CD8-positive, alpha-beta T cell (primary cell): ENCODE measurements at regions of chr10 and their contacts with region 1.

Region 1: GRCh38 chr10:101467286-101467770 is 113.4 kb downstream of the BTRC start:
- DNase-seq: peak in 5 of 9 experiments; percentile 7 to 73 (median 23)
- ATAC-seq: peak; percentile 75
- H3K4me3 ChIP-seq: no peak overlapping the region
- H3K4me3 Mint-ChIP-seq: no peak overlapping the region
- H3K27ac ChIP-seq: no peak overlapping the region
- H3K27ac Mint-ChIP-seq: no peak overlapping the region
- H3K4me1 ChIP-seq: peaks cover 4% of the 10 kb centered on the region
- H3K4me1 Mint-ChIP-seq: peaks cover 8% of the 10 kb centered on the region
- H3K27me3 ChIP-seq: no peaks in the 10 kb centered on the region
- H3K27me3 Mint-ChIP-seq: no peaks in the 10 kb centered on the region
- CTCF ChIP-seq: peak; percentile 86

Region 2: DNA sequence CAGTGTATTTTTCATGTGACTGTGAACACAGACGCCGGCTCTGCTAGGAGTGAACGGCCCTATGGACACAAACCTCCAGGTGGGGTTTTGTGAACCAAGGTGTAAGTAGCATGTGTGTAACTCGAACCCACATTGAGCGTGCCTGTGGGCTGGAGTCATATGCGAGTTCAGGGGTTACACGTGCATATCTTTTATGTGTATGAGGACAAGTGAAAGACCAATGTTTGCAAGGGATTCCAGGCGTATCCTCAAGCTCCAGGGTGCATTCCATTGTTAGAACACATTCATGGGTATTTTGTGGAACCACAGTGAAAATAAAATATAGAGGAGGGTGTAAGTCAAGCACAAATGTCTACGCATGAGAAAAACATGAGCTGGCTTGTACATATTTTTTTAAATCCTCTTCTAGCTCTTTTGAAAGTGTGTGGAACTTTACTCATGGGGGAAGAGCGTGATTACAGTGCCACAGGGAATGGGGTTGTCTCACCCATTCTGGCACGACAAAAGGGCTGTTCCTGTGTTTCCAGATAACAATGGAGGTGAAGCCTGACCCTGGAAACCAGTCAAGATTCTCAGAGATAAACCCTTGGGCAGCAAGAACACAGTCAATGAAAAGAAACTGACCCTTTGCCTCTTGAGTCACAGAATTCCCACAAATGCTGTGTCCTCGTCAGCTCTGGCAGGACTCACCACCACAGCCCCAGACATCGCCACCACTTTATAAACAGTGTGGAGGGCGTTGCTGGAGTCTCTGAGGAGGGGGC is 1999.9 kb before region 1 on chr10:
- CTCF ChIA-PET with region 1: no interaction called
- POLR2A ChIA-PET with region 1: no interaction called
- intact Hi-C with region 1: no loop called
- DNase-seq: no peak
- ATAC-seq: no peak
- H3K4me3 ChIP-seq: no peak overlapping the region
- H3K4me3 Mint-ChIP-seq: no peak overlapping the region
- H3K27ac ChIP-seq: no peak overlapping the region
- H3K27ac Mint-ChIP-seq: no peak overlapping the region
- H3K4me1 ChIP-seq: no peaks in the 10 kb centered on the region
- H3K4me1 Mint-ChIP-seq: no peaks in the 10 kb centered on the region
- H3K27me3 ChIP-seq: peaks cover 0 to 5% of the 10 kb centered on the region in 2 experiments
- H3K27me3 Mint-ChIP-seq: peaks cover 25% of the 10 kb centered on the region
- CTCF ChIP-seq: no peak

Region 3: GRCh38 chr10:101297901-101298486 is 169.3 kb before region 1 on chr10:
- CTCF ChIA-PET with region 1: interaction called, 9 read pairs
- POLR2A ChIA-PET with region 1: no interaction called
- intact Hi-C with region 1: loop called (anchors 2 to 5 kb)
- DNase-seq: peak; percentile 51 to 82 (median 74)
- ATAC-seq: peak; percentile 89
- H3K4me3 ChIP-seq: no peak overlapping the region
- H3K4me3 Mint-ChIP-seq: no peak overlapping the region
- H3K27ac ChIP-seq: no peak overlapping the region
- H3K27ac Mint-ChIP-seq: no peak overlapping the region
- H3K4me1 ChIP-seq: peaks cover under 1% of the 10 kb centered on the region
- H3K4me1 Mint-ChIP-seq: peaks cover 2% of the 10 kb centered on the region
- H3K27me3 ChIP-seq: peaks cover 3 to 4% of the 10 kb centered on the region in 2 experiments
- H3K27me3 Mint-ChIP-seq: peaks cover 50% of the 10 kb centered on the region
- CTCF ChIP-seq: peak; percentile 89

Region 4: DNA sequence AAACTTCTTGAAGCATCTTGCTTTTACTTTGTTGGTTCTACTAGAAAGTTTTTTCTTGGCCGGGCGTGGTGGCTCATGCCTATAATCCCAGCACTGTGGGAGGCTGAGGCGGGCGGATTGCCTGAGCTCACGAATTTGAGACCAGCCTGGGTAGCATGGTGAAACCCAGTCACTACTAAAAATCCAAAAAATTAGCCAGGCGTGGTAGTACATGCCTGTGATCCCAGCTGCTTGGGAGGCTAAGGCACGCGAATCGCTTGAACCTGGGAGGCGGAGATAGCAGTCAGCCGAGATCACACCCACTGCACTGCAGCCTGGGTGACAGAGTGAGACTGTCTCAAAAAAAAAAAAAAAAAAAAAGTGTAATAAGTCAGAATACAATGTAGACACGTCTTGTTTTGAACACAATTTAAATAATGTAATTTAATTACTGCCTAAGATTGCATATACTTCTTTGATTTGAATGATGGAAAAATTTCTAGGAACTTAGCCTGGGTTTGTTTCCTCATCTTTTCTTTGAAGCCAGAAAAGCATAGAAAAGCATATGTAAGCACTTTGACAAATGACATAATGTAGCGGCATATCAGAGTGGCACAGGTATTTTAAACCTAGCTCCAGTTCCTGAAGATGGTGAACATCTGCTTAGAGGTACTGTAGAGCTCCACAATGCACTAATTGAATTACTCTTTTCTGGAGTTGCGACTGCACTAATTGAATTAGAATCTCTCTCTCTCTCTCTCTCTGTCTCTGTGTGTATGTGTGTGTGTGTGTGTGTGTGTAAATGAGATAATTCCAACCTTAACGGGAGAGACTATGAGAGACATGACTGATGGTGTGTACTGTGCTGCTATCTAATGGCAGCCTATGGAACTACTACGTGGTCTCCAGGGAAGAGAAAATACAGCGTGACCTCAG is 25.5 kb before region 1 on chr10:
- CTCF ChIA-PET with region 1: interaction called, 14 read pairs
- POLR2A ChIA-PET with region 1: no interaction called
- intact Hi-C with region 1: no loop called
- DNase-seq: peak in 2 of 9 experiments; percentile 43 to 61
- ATAC-seq: peak; percentile 89
- H3K4me3 ChIP-seq: no peak overlapping the region
- H3K4me3 Mint-ChIP-seq: no peak overlapping the region
- H3K27ac ChIP-seq: no peak overlapping the region
- H3K27ac Mint-ChIP-seq: no peak overlapping the region
- H3K4me1 ChIP-seq: no peaks in the 10 kb centered on the region
- H3K4me1 Mint-ChIP-seq: peaks cover 6% of the 10 kb centered on the region
- H3K27me3 ChIP-seq: no peaks in the 10 kb centered on the region
- H3K27me3 Mint-ChIP-seq: no peaks in the 10 kb centered on the region
- CTCF ChIP-seq: peak; percentile 55

Region 5: DNA sequence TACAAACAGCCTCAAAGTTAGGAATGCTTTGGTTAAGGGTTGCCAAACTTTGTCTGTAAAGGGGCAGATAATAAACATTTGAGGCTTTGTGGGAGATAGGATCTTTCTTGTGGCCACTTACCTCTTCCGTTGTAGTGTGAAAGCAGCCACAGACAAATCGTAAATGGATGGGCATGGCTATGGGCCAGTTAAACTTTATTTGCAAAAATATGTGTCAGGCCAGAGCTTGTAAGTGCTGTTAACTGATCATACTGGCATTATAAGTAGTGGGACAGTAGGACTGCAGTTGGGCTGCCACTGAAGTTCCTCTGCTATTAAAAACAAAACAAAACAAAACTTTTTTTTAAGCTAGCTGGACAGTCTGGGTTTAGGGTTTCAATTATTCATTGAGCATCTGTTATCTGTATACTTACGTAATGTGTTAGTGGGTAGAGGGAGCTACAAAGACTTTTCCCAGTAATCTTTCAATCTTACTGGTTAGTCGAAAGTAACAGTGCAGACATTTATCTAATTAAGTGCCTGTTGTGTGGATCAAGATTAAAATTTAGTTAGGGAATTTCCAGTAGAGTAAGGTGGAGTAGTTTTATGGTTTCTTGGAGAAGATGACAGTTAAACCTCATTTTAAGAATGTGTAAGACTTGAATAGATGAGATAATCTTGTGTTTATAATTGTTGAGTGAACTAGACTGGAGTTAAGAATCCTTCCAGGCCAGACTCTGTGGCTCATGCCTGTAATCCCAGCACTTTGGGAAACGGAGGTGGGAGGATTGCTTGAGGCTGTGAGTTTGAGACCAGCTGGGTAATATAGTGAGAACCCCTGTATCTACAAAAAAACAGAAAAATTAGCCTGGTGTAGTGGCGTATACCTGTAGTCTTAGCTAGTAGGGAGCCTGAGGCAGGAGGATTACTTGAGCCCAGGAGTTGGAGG is 13.3 kb before region 1 on chr10:
- CTCF ChIA-PET with region 1: interaction called, 34 read pairs
- POLR2A ChIA-PET with region 1: interaction called, 6 read pairs
- intact Hi-C with region 1: no loop called
- DNase-seq: peak in 2 of 9 experiments; percentile 24 to 32
- ATAC-seq: no peak
- H3K4me3 ChIP-seq: no peak overlapping the region
- H3K4me3 Mint-ChIP-seq: no peak overlapping the region
- H3K27ac ChIP-seq: no peak overlapping the region
- H3K27ac Mint-ChIP-seq: no peak overlapping the region
- H3K4me1 ChIP-seq: peaks cover 18% of the 10 kb centered on the region
- H3K4me1 Mint-ChIP-seq: peaks cover 35% of the 10 kb centered on the region
- H3K27me3 ChIP-seq: no peaks in the 10 kb centered on the region
- H3K27me3 Mint-ChIP-seq: no peaks in the 10 kb centered on the region
- CTCF ChIP-seq: no peak